Heart left ventricle (tissue), 16 donors: ENCODE measurements at regions of chr11 and their contacts with region 1.

Region 1: GRCh38 chr11:58805065-58805464 is 39.4 kb downstream of the GLYATL2 start:
- DNase-seq: no peak
- ATAC-seq: no peak
- H3K4me3 ChIP-seq: no peak overlapping the region
- H3K27ac ChIP-seq: no peak overlapping the region
- H3K4me1 ChIP-seq: no peaks in the 10 kb centered on the region
- H3K27me3 ChIP-seq: no peaks in the 10 kb centered on the region
- CTCF ChIP-seq: no peak
- POLR2A ChIP-seq: no peak

Region 2: GRCh38 chr11:58742981-58743880 is 61.8 kb before region 1 on chr11:
- intact Hi-C with region 1: loop called in 1 of 10 experiments (anchors 10 kb)
- DNase-seq: no peak
- ATAC-seq: no peak
- H3K4me3 ChIP-seq: no peak overlapping the region
- H3K27ac ChIP-seq: no peak overlapping the region
- H3K4me1 ChIP-seq: no peaks in the 10 kb centered on the region
- H3K27me3 ChIP-seq: no peaks in the 10 kb centered on the region
- CTCF ChIP-seq: no peak
- POLR2A ChIP-seq: no peak

Region 3: DNA sequence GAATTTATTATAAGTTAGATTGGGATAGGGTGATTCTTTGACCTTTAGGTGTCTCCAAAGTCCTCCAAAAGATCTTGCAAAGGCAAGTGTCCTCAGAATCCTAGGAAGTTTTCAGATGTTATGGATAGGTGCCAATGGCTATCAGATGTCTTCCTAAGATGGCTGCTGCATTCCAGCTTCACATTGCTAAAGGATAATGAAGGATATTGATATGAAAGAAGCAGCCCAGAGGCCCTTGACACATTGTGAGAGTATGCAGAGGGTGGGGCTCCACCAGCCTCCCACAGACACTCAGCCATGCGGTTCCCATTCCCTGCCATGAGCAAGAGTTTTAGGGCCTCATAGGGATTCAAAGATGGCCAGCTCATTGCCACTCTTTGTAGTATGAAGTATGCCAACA is 61.7 kb after region 1 on chr11:
- intact Hi-C with region 1: no loop called
- DNase-seq: no peak
- ATAC-seq: no peak
- H3K4me3 ChIP-seq: no peak overlapping the region
- H3K27ac ChIP-seq: no peak overlapping the region
- H3K4me1 ChIP-seq: no peaks in the 10 kb centered on the region
- H3K27me3 ChIP-seq: no peaks in the 10 kb centered on the region
- CTCF ChIP-seq: no peak
- POLR2A ChIP-seq: no peak